ENCODE measurements at regions of chr2 and their contacts with region 1.

Region 1: DNA sequence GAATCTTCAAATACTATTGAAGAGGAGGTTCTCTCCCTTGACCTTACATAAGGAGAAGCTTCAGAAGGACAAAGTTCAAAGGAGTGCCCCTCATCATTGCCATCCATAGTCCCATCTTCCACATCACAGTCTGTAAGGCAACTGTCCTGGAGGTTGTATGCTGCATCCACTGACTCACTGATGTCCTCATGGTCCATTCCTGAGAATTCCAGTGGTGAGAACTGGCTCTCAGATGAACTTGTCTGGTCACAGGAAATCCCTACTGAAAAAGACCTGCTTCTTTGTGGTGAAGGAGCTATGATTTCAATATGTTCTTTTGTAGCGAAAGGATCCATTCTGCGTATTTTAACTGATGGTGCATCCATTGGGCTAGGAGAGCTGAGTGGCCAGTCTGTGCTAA is 52.2 kb downstream of the EIF2AK3 start:
- DNase-seq: no peak
- H3K4me3 ChIP-seq: no peak overlapping the region
- H3K27ac ChIP-seq: no peak overlapping the region
- H3K4me1 ChIP-seq: no peaks in the 10 kb centered on the region
- H3K27me3 ChIP-seq: no peaks in the 10 kb centered on the region
- CTCF ChIP-seq: no peak

Region 2: DNA sequence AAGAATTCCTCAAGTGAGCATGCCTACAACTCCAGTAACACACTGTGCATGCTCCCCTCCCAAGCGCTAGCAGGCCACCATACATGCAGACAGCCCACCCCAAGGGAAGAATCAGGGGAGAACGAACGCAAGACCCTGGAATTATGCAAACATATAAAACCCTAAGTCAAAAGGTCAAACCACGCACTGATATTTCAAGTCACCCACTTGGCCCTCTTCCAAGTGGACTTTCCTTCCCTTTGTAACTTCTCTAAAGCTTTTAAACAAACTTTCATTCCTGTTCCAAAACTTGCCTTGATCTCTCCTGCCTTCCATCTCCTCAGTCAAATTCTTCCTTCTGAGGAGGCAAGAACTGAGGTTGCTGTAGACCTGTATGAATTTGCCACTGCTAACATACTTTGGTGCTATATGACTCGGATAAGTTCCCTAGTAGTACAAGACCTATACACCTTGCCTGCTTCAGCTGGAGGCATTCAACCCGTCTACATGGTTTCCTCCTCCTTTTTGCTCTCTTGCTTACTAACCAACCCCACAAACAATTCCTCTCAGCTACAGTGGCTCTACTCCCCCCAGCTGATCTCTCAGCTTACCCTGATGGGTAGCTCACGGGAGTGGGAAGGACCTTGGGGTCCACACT is 105.3 kb after region 1 on chr2:
- CTCF ChIA-PET with region 1: no interaction called
- dilution Hi-C with region 1: loop called (anchors 5 kb)
- in situ Hi-C with region 1: no loop called
- intact Hi-C with region 1: no loop called
- DNase-seq: no peak
- H3K4me3 ChIP-seq: no peak overlapping the region
- H3K27ac ChIP-seq: no peak overlapping the region
- H3K4me1 ChIP-seq: no peaks in the 10 kb centered on the region
- H3K27me3 ChIP-seq: no peaks in the 10 kb centered on the region
- CTCF ChIP-seq: no peak

Region 3: DNA sequence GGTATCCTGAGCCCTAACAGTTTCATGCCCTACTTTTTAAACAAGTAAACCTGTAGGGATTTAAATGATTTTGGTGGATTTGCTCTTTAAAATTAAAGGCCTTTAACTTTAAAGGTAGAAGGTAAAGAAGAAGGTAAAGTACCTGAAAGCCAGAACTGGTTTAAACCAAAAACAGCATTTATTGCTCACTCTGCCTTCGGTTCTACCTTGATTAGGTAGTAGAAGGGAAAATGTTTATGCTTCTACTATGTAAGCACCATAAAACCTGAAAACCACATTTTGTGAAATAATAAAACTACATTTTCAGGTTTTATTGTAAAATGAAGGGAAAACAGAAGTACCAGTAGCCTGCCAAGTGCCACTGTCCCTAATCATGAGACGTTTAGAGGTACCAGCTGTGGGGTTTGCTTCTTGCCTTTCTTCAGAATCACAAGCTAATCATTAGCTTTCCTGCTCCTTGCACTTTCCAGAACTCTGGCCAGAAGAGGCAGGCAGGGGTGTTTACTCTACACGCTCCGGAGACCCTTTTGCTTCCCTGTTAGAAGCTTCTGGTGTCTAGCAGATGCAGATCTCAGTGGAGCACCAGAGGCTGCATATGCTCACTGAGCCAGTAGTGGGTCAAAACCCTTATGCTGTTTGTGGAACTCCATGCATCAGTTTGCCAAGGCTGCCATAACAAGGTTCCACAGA is 149.7 kb after region 1 on chr2:
- CTCF ChIA-PET with region 1: no interaction called
- dilution Hi-C with region 1: no loop called
- in situ Hi-C with region 1: no loop called
- intact Hi-C with region 1: no loop called
- DNase-seq: no peak
- H3K4me3 ChIP-seq: no peak overlapping the region
- H3K27ac ChIP-seq: no peak overlapping the region
- H3K4me1 ChIP-seq: peaks cover 8% of the 10 kb centered on the region
- H3K27me3 ChIP-seq: no peaks in the 10 kb centered on the region
- CTCF ChIP-seq: no peak